RWPE1 (cell line): ENCODE measurements at regions of chr2 and their contacts with region 1.

Region 1: DNA sequence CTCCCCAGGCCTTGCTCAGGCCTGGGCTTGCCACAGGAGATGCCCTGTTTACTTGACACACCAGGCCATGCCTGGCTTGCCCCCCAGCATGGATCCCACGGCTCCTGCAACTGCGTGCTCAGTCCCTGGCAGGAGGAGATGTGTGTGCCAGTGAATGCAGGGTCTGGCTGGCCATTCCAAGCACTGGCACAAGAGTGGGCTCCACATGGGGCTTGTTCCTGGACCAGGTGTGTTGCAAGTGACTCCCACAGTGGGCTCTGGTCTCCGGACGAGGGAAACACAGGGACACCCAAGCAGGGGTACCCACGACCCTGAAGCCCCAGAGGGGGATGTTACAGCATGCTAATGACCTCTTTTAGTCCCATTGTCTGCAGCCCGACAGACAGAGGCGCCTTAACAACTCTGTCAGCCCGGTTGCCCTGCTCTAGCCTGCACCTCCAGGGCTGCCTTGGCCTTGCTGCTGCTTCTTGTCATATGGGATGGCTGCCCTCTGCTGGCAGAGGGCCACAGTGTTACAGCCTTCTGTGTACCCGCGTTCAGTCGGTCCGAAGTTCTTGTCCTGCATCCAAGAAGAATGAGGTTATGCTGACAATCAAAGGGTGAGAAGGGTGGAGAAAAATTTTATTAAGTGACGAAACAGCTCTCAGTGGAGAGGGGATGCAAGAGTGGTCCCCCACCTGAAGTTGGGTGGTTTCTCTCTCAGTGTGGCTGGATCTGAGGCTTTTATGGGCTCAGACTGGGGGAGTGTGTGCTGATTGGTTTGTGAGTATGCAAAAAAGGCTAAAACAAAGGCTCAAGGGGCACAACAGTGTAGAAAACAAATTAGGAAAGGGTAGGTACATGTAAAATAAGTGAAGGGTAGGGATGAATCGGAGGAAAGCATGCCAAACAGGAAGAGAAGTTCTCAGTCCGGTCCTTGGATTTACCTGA is 180.4 kb downstream of the MBD5 start:
- DNase-seq: peak; percentile 9
- H3K27ac ChIP-seq: no peak overlapping the region
- CTCF ChIP-seq: no peak

Region 2: DNA sequence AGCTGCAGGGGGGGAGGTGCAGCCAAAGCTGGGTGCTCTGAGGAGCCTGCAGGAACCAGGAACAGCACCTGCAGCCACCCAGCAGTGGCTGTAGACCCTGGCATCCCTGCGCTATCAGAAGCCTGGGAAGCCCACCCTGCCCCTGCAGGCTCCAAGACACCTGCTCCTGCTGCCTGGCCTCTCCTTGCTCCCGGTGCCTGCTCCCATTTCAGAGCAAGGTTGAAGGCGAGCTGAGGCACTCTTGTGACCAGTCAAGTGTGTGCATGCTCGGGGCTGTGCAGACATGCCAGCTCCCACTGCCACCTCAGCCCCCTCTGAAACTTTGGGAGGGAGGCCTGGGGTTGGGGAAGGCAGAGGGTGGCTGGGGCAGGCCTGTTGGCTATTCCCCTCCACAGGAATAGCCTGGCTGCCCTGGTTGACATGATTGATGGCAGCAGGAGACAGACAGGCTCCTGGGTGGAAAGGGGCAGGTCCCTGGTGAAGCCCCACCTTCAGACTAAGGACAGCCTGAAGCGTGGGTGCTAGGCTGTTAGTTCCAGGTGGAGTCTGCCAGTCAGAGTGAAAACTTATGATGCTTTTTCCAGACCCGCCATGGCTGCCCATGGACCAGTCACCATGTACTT is 29.1 kb before region 1 on chr2:
- CTCF ChIA-PET with region 1: interaction called, 15 read pairs
- POLR2A ChIA-PET with region 1: no interaction called
- DNase-seq: no peak
- H3K27ac ChIP-seq: no peak overlapping the region
- CTCF ChIP-seq: no peak

Region 3: GRCh38 chr2:148218326-148219075 is 17.2 kb after region 1 on chr2:
- CTCF ChIA-PET with region 1: no interaction called
- POLR2A ChIA-PET with region 1: no interaction called
- DNase-seq: no peak
- H3K27ac ChIP-seq: no peak overlapping the region
- CTCF ChIP-seq: no peak